PC-3 (cell line): ENCODE measurements at regions of chr5 and their contacts with region 1.

Region 1: GRCh38 chr5:97534166-97534565 is 351.1 kb upstream of the RIOK2 start:
- DNase-seq: peak; percentile 88
- ATAC-seq: peak; percentile 92
- H3K4me3 ChIP-seq: no peak overlapping the region
- H3K27ac ChIP-seq: peak overlapping the region; percentile 26
- H3K4me1 ChIP-seq: peaks cover 10% of the 10 kb centered on the region
- H3K27me3 ChIP-seq: no peaks in the 10 kb centered on the region
- CTCF ChIP-seq: peak; percentile 82

Region 2: GRCh38 chr5:97049175-97049574 is 485.0 kb before region 1 on chr5:
- CTCF ChIA-PET with region 1: no interaction called
- POLR2A ChIA-PET with region 1: no interaction called
- intact Hi-C with region 1: no loop called
- DNase-seq: no peak
- ATAC-seq: no peak
- H3K4me3 ChIP-seq: no peak overlapping the region
- H3K27ac ChIP-seq: no peak overlapping the region
- H3K4me1 ChIP-seq: no peaks in the 10 kb centered on the region
- H3K27me3 ChIP-seq: peaks cover 6% of the 10 kb centered on the region; the same call in 1 of the 2 replicates
- CTCF ChIP-seq: no peak

Region 3: GRCh38 chr5:97231025-97231636 is 303.0 kb before region 1 on chr5:
- CTCF ChIA-PET with region 1: interaction called, 17 read pairs
- POLR2A ChIA-PET with region 1: no interaction called
- intact Hi-C with region 1: loop called (anchors 1 kb)
- DNase-seq: peak; percentile 79
- ATAC-seq: peak; percentile 81
- H3K4me3 ChIP-seq: no peak overlapping the region
- H3K27ac ChIP-seq: no peak overlapping the region
- H3K4me1 ChIP-seq: peaks cover 6% of the 10 kb centered on the region; the same call in 1 of the 2 replicates
- H3K27me3 ChIP-seq: no peaks in the 10 kb centered on the region
- CTCF ChIP-seq: peak; percentile 92

Region 4: GRCh38 chr5:97383996-97384395 is 150.2 kb before region 1 on chr5:
- CTCF ChIA-PET with region 1: no interaction called
- POLR2A ChIA-PET with region 1: no interaction called
- intact Hi-C with region 1: loop called (anchors 2 kb)
- DNase-seq: peak; percentile 72
- ATAC-seq: peak; percentile 52
- H3K4me3 ChIP-seq: no peak overlapping the region
- H3K27ac ChIP-seq: no peak overlapping the region
- H3K4me1 ChIP-seq: peaks cover 11% of the 10 kb centered on the region
- H3K27me3 ChIP-seq: no peaks in the 10 kb centered on the region
- CTCF ChIP-seq: no peak

Region 5: GRCh38 chr5:97666773-97667172 is 132.6 kb after region 1 on chr5:
- CTCF ChIA-PET with region 1: no interaction called
- POLR2A ChIA-PET with region 1: no interaction called
- intact Hi-C with region 1: loop called (anchors 5 kb)
- DNase-seq: peak; percentile 51
- ATAC-seq: peak; percentile 83
- H3K4me3 ChIP-seq: no peak overlapping the region
- H3K27ac ChIP-seq: 0 out of 2 replicates have a peak overlapping the region, but pooled peaks have one; percentile 18
- H3K4me1 ChIP-seq: peaks cover 10% of the 10 kb centered on the region
- H3K27me3 ChIP-seq: no peaks in the 10 kb centered on the region
- CTCF ChIP-seq: no peak